Prostate gland (tissue), 2 donors: ENCODE measurements at regions of chr2 and their contacts with region 1.

Region 1: DNA sequence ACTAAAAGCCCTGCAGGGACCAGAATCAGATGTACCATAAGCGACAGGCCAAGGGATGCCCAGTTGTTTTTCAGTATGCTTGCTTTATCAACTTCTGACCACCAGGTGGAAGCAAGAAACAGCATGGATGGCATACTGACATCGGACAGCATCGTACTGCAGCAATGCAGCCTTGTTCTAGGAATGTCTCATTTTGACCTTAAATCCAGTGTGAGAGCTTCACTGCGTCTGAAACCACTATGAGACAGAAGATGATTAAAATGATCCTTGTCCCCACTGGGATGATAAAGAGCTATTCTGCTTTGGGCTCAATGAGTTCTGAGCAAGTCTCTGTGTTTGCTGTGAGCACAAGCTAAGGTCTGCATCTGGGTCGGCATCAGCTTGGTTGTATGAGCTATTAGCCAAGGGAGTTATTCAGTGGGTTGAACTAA is 54.3 kb downstream of the CDK15 start:
- DNase-seq: peak; percentile 59
- H3K4me3 ChIP-seq: no peak overlapping the region
- H3K27ac ChIP-seq: no peak overlapping the region
- H3K4me1 ChIP-seq: no peaks in the 10 kb centered on the region
- H3K27me3 ChIP-seq: peaks cover 3% of the 10 kb centered on the region
- CTCF ChIP-seq: peak; percentile 64 to 89 (median 84)
- POLR2A ChIP-seq: no peak

Region 2: DNA sequence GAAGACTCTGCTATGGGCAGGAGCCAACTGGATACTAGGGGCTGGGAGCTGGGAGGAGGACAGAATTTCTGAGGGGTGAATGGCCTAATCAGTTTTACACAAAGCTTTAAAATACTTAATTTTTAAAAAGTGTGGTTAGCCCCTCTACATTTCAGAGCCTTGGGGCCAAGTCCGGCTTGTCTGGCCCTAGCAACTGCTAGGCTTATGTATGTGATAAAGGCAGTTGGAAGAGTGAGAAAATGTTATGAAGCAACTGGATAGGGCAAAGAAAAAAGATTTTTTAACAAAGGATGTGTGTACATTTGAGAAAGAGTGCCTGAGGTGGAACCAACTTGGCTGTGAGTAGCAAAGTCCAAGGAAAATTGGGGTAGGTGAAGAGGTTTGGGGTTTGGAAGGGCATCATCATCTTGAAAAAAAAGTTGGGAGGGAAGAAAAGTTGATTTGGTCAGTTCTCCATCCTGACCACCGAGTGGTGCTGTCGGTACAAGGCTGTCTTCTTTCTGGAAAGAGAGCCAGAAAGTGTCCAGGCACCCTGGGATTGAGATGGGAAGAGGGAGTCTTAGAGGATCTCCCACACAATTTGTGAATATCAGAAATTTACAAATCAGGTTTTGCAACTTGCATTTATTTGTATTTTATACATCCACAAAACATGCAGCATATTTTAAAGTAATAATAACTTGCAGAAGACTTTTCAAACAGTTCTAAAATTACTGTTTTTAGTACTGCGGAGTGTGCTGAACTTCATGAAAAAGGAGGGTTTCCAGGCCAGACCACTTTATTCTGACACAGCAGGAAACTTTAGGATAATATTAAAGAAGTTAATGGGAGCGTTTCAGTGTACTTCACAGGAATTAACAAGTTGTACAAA is 64.8 kb before region 1 on chr2:
- intact Hi-C with region 1: loop called (anchors 5 kb)
- DNase-seq: no peak
- H3K4me3 ChIP-seq: no peak overlapping the region
- H3K27ac ChIP-seq: no peak overlapping the region
- H3K4me1 ChIP-seq: no peaks in the 10 kb centered on the region
- H3K27me3 ChIP-seq: no peaks in the 10 kb centered on the region
- CTCF ChIP-seq: peak in 2 of 4 experiments; percentile 46 to 68
- POLR2A ChIP-seq: no peak